CD8-positive, alpha-beta T cell (primary cell): ENCODE measurements at regions of chr7 and their contacts with region 1.

Region 1: DNA sequence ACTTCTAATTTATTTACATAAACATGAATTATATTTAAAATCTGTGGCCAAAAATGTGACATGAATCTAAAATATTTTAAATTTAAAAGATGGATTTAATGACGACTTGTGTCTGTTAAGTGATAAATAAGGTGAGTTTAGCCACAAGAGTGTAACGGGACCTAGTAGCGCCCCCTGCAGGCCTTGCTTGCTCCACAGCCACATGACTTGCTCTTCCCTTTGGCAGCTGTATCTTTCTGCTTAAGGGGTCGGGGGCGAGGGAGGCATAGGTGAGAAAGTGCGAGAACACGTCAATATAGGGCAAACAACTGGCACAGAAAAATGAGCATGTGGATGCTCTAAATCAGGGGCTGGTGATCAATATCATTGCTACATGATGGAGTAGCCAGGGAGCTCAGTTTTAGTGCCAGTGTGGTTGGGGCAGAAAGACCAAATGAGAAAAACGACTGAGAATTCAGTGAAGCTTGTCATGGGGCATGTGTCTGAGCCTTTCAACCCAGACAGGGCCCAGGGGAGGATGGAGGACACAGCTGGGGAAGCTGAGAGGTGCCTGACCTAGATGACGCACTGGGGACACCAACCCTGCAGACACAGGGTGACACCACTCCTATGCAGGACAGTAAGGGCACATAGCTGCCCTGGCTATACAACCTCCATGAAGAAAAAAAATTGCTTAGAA is 49.8 kb downstream of the PAXIP1 start:
- DNase-seq: peak; percentile 43 to 77 (median 75)
- ATAC-seq: peak; percentile 73
- H3K4me3 ChIP-seq: no peak overlapping the region
- H3K4me3 Mint-ChIP-seq: no peak overlapping the region
- H3K27ac ChIP-seq: no peak overlapping the region
- H3K27ac Mint-ChIP-seq: no peak overlapping the region
- H3K4me1 ChIP-seq: no peaks in the 10 kb centered on the region
- H3K4me1 Mint-ChIP-seq: no peaks in the 10 kb centered on the region
- H3K27me3 ChIP-seq: no peaks in the 10 kb centered on the region
- H3K27me3 Mint-ChIP-seq: no peaks in the 10 kb centered on the region
- CTCF ChIP-seq: peak; percentile 65

Region 2: DNA sequence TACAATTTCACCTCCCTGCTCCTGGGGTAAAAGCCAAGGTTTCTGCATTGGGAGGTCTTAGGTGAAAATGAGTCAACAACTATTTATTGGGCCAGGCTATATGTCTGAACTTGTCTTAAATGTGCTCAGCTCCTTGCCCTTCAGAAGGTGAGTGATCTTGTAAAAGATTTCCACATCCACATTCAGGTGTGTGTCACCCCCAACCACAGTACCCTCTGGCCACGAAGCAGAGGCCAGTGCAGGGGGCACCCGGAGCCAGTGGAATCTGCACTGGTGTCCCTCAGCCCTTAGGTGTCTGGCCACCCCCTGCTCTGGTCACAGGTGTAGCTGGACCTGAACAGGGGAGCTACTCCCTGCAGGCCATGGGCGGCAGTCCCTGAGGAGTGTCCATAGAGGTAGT is 148.7 kb before region 1 on chr7:
- CTCF ChIA-PET with region 1: no interaction called
- POLR2A ChIA-PET with region 1: no interaction called
- intact Hi-C with region 1: no loop called
- DNase-seq: no peak
- ATAC-seq: no peak
- H3K4me3 ChIP-seq: no peak overlapping the region
- H3K4me3 Mint-ChIP-seq: no peak overlapping the region
- H3K27ac ChIP-seq: no peak overlapping the region
- H3K27ac Mint-ChIP-seq: no peak overlapping the region
- H3K4me1 ChIP-seq: no peaks in the 10 kb centered on the region
- H3K4me1 Mint-ChIP-seq: no peaks in the 10 kb centered on the region
- H3K27me3 ChIP-seq: no peaks in the 10 kb centered on the region
- H3K27me3 Mint-ChIP-seq: no peaks in the 10 kb centered on the region
- CTCF ChIP-seq: no peak

Region 3: GRCh38 chr7:154913638-154914312 is 39.4 kb before region 1 on chr7:
- CTCF ChIA-PET with region 1: interaction called, 49 read pairs
- POLR2A ChIA-PET with region 1: no interaction called
- intact Hi-C with region 1: loop called (anchors 1 kb)
- DNase-seq: peak; percentile 77 to 93 (median 86)
- ATAC-seq: peak; percentile 95
- H3K4me3 ChIP-seq: peak overlapping the region; percentile 34 to 37
- H3K4me3 Mint-ChIP-seq: peak overlapping the region; percentile 86
- H3K27ac ChIP-seq: no peak overlapping the region
- H3K27ac Mint-ChIP-seq: no peak overlapping the region
- H3K4me1 ChIP-seq: no peaks in the 10 kb centered on the region
- H3K4me1 Mint-ChIP-seq: peaks cover 3% of the 10 kb centered on the region
- H3K27me3 ChIP-seq: no peaks in the 10 kb centered on the region
- H3K27me3 Mint-ChIP-seq: peaks cover 29% of the 10 kb centered on the region
- CTCF ChIP-seq: peak; percentile 91

Region 4: DNA sequence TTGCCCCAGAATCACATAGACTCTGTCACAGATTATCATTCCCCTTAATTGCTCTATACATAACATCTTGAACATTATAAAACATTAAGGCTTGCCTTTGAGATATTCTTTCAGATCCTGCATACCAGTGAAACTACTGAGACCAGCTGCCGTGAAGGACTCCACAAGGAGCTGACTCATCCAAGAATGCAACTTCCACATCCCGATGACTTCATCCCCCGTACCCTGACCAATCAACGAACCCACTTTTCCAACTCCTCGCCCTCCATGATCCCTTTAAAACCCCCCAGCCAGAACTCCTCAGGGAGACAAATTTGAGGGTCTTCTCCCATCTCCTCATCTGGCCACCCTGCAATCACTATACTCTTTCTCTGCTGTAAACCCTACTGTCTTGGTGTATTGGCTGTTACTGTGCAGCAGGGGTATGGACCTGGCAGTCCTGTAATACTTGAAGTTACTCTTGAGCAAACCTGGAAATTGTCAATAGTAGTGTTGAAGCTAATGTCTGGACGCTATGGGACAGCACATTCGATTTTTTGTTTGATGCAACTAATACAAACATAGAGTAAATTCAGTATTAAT is 166.7 kb after region 1 on chr7:
- CTCF ChIA-PET with region 1: no interaction called
- POLR2A ChIA-PET with region 1: no interaction called
- intact Hi-C with region 1: no loop called
- DNase-seq: no peak
- ATAC-seq: no peak
- H3K4me3 ChIP-seq: no peak overlapping the region
- H3K4me3 Mint-ChIP-seq: no peak overlapping the region
- H3K27ac ChIP-seq: no peak overlapping the region
- H3K27ac Mint-ChIP-seq: no peak overlapping the region
- H3K4me1 ChIP-seq: no peaks in the 10 kb centered on the region
- H3K4me1 Mint-ChIP-seq: no peaks in the 10 kb centered on the region
- H3K27me3 ChIP-seq: no peaks in the 10 kb centered on the region
- H3K27me3 Mint-ChIP-seq: peaks cover 10% of the 10 kb centered on the region
- CTCF ChIP-seq: no peak